PC-3 (cell line): ENCODE measurements at regions of chr2 and their contacts with region 1.

Region 1: GRCh38 chr2:107025869-107026380 is 140.0 kb upstream of the ST6GAL2 start:
- DNase-seq: peak; percentile 98
- ATAC-seq: peak; percentile 92
- H3K4me3 ChIP-seq: no peak overlapping the region
- H3K27ac ChIP-seq: peak overlapping the region; percentile 100
- H3K4me1 ChIP-seq: peaks cover 37% of the 10 kb centered on the region
- H3K27me3 ChIP-seq: no peaks in the 10 kb centered on the region
- CTCF ChIP-seq: no peak

Region 2: GRCh38 chr2:106886916-106887758 is 138.8 kb before region 1 on chr2:
- CTCF ChIA-PET with region 1: no interaction called
- POLR2A ChIA-PET with region 1: interaction called, 4 read pairs
- intact Hi-C with region 1: loop called (anchors 1 kb)
- DNase-seq: peak; percentile 92
- ATAC-seq: peak; percentile 78
- H3K4me3 ChIP-seq: peak overlapping the region; percentile 83
- H3K27ac ChIP-seq: peak overlapping the region; percentile 88
- H3K4me1 ChIP-seq: peaks cover 21% of the 10 kb centered on the region
- H3K27me3 ChIP-seq: no peaks in the 10 kb centered on the region
- CTCF ChIP-seq: no peak; the same call in 1 of the 2 replicates

Region 3: GRCh38 chr2:106970471-106971261 is 55.3 kb before region 1 on chr2:
- CTCF ChIA-PET with region 1: interaction called, 3 read pairs
- POLR2A ChIA-PET with region 1: interaction called, 4 read pairs
- intact Hi-C with region 1: loop called (anchors 10 kb)
- DNase-seq: peak; percentile 83
- ATAC-seq: peak; percentile 94
- H3K4me3 ChIP-seq: peak overlapping the region; percentile 5; the same call in 1 of the 2 replicates
- H3K27ac ChIP-seq: peak overlapping the region; percentile 88
- H3K4me1 ChIP-seq: peaks cover 38% of the 10 kb centered on the region
- H3K27me3 ChIP-seq: no peaks in the 10 kb centered on the region
- CTCF ChIP-seq: no peak

Region 4: GRCh38 chr2:106990297-106990696 is 35.6 kb before region 1 on chr2:
- CTCF ChIA-PET with region 1: no interaction called
- POLR2A ChIA-PET with region 1: no interaction called
- intact Hi-C with region 1: loop called (anchors 5 kb)
- DNase-seq: peak; percentile 91
- ATAC-seq: peak; percentile 91
- H3K4me3 ChIP-seq: no peak overlapping the region
- H3K27ac ChIP-seq: peak overlapping the region; percentile 95
- H3K4me1 ChIP-seq: peaks cover 42% of the 10 kb centered on the region
- H3K27me3 ChIP-seq: no peaks in the 10 kb centered on the region
- CTCF ChIP-seq: no peak

Region 5: GRCh38 chr2:107001964-107002707 is 23.8 kb before region 1 on chr2:
- CTCF ChIA-PET with region 1: no interaction called
- POLR2A ChIA-PET with region 1: interaction called, 4 read pairs
- intact Hi-C with region 1: loop called (anchors 1 kb)
- DNase-seq: peak; percentile 95
- ATAC-seq: peak; percentile 78
- H3K4me3 ChIP-seq: peak overlapping the region; percentile 14; the same call in 1 of the 2 replicates
- H3K27ac ChIP-seq: peak overlapping the region; percentile 99
- H3K4me1 ChIP-seq: peaks cover 70% of the 10 kb centered on the region
- H3K27me3 ChIP-seq: no peaks in the 10 kb centered on the region
- CTCF ChIP-seq: no peak